GM12878 (cell line): ENCODE measurements at regions of chr20 and their contacts with region 1.

Region 1: DNA sequence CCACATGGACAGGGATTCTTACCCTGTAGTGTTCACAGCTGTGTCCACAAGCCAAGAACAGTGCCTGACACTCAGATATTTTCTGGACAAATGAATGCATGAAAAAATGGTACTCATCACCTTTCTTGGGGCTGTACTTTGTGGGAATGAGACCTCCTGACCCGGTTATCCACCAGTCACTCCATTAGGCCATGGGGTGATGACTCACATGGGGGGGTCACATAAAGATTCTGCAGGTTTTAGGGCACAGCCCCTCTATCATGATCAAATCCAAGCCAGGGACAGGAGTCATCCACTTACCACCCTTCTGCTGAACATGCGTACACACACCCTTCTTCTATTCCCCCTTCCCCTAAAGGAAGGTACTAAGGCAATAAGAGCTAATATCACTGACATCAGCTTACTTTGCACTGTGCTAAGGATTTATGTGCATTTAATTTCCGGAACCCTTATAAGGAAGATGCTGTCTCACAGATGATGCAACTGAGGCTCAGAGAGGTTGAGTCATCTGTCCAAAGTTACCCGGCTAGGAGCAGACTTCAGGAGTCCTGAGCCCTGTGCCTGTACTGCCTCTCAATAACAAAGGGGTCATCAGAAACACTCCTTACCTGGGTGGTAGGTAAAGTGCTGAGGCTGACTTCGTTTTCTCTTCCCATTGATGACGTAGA is 107.8 kb downstream of the NFATC2 start:
- DNase-seq: no peak
- ATAC-seq: no peak
- H3K4me3 ChIP-seq: no peak overlapping the region
- H3K27ac ChIP-seq: no peak overlapping the region
- H3K4me1 ChIP-seq: peaks cover 8% of the 10 kb centered on the region
- H3K27me3 ChIP-seq: no peaks in the 10 kb centered on the region
- CTCF ChIP-seq: no peak
- EP300 ChIP-seq: no peak
- POLR2A ChIP-seq: no peak
- RAD21 ChIP-seq: no peak

Region 2: GRCh38 chr20:51366155-51366886 is 68.4 kb before region 1 on chr20:
- CTCF ChIA-PET with region 1: no interaction called
- POLR2A ChIA-PET with region 1: no interaction called
- RAD21 ChIA-PET with region 1: no interaction called
- SMC1A ChIA-PET with region 1: no interaction called
- in situ Hi-C with region 1: no loop called
- intact Hi-C with region 1: no loop called
- DNase-seq: no peak
- ATAC-seq: peak; percentile 50
- H3K4me3 ChIP-seq: no peak overlapping the region
- H3K27ac ChIP-seq: no peak overlapping the region
- H3K4me1 ChIP-seq: peaks cover 3% of the 10 kb centered on the region; the same call in 1 of the 2 replicates
- H3K27me3 ChIP-seq: no peaks in the 10 kb centered on the region
- CTCF ChIP-seq: no peak
- EP300 ChIP-seq: no peak
- POLR2A ChIP-seq: no peak
- RAD21 ChIP-seq: no peak

Region 3: GRCh38 chr20:51487565-51488268 is 53.0 kb after region 1 on chr20:
- CTCF ChIA-PET with region 1: no interaction called
- POLR2A ChIA-PET with region 1: no interaction called
- RAD21 ChIA-PET with region 1: no interaction called
- SMC1A ChIA-PET with region 1: no interaction called
- in situ Hi-C with region 1: loop called (anchors 5 kb)
- intact Hi-C with region 1: no loop called
- DNase-seq: no peak
- ATAC-seq: no peak
- H3K4me3 ChIP-seq: no peak overlapping the region
- H3K27ac ChIP-seq: no peak overlapping the region
- H3K4me1 ChIP-seq: peaks cover 2% of the 10 kb centered on the region
- H3K27me3 ChIP-seq: no peaks in the 10 kb centered on the region
- CTCF ChIP-seq: no peak
- EP300 ChIP-seq: no peak
- POLR2A ChIP-seq: no peak
- RAD21 ChIP-seq: no peak

Region 4: GRCh38 chr20:51715163-51715860 is 280.6 kb after region 1 on chr20:
- CTCF ChIA-PET with region 1: no interaction called
- POLR2A ChIA-PET with region 1: no interaction called
- RAD21 ChIA-PET with region 1: no interaction called
- SMC1A ChIA-PET with region 1: no interaction called
- in situ Hi-C with region 1: no loop called
- intact Hi-C with region 1: no loop called
- DNase-seq: no peak
- ATAC-seq: no peak
- H3K4me3 ChIP-seq: no peak overlapping the region
- H3K27ac ChIP-seq: no peak overlapping the region
- H3K4me1 ChIP-seq: no peaks in the 10 kb centered on the region
- H3K27me3 ChIP-seq: no peaks in the 10 kb centered on the region
- CTCF ChIP-seq: no peak
- EP300 ChIP-seq: no peak
- POLR2A ChIP-seq: no peak
- RAD21 ChIP-seq: no peak